CD14-positive monocyte (primary cell): ENCODE measurements at regions of chr4 and their contacts with region 1.

Region 1: DNA sequence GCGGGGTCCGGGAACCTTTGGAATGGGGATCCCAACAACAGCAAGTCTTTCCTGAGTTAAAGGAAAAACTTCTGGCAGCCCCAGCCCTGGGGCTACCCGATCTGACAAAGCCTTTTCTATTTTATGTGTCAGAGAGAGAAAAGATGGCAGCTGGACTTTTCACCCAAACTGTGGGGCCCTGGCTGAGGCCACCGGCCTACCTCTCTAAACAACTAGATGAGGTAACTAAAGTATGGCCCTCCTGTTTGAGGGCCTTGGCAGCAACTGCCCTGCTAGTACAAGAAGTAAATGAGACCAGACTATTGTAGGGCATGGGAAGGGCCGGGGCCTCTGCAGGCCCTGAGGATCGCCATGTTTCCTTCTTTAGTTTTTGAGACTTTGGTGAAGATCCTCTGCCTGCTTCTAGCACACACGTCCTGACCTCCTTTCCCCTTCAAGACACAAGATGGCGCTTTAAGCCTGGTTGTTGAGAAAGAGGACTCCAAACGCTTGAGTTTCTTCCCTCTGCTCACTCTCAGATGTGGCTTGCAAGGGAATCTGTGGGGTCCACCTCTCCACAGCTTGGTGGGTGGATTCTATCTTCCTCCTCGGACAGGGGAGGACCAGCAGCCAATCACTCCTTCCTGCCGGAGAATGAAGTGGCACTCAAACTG is 18.5 kb upstream of the DRD5 start:
- DNase-seq: peak; percentile 42 to 65 (median 56)
- H3K4me3 ChIP-seq: no peak overlapping the region
- H3K4me3 Mint-ChIP-seq: no peak overlapping the region
- H3K27ac ChIP-seq: no peak overlapping the region
- H3K27ac Mint-ChIP-seq: peak overlapping the region in 1 of 7 donors; percentile 5
- H3K4me1 ChIP-seq: peaks cover 3% of the 10 kb centered on the region in 2 donors
- H3K4me1 Mint-ChIP-seq: peaks cover 6% of the 10 kb centered on the region
- H3K27me3 ChIP-seq: no peaks in the 10 kb centered on the region
- H3K27me3 Mint-ChIP-seq: peaks cover 0 to 13% (median 8%) of the 10 kb centered on the region in 3 donors
- CTCF ChIP-seq: peak; percentile 65

Region 2: GRCh38 chr4:9679704-9680478 is 83.1 kb before region 1 on chr4:
- intact Hi-C with region 1: no loop called
- DNase-seq: no peak
- H3K4me3 ChIP-seq: no peak overlapping the region
- H3K4me3 Mint-ChIP-seq: no peak overlapping the region
- H3K27ac ChIP-seq: no peak overlapping the region
- H3K27ac Mint-ChIP-seq: no peak overlapping the region
- H3K4me1 ChIP-seq: no peaks in the 10 kb centered on the region
- H3K4me1 Mint-ChIP-seq: no peaks in the 10 kb centered on the region
- H3K27me3 ChIP-seq: no peaks in the 10 kb centered on the region
- H3K27me3 Mint-ChIP-seq: peaks cover 0 to 10% (median 4%) of the 10 kb centered on the region in 3 donors
- CTCF ChIP-seq: no peak

Region 3: GRCh38 chr4:9716093-9716492 is 46.9 kb before region 1 on chr4:
- intact Hi-C with region 1: no loop called
- DNase-seq: no peak
- H3K4me3 ChIP-seq: no peak overlapping the region
- H3K4me3 Mint-ChIP-seq: no peak overlapping the region
- H3K27ac ChIP-seq: no peak overlapping the region
- H3K27ac Mint-ChIP-seq: peak overlapping the region in 1 of 7 donors; percentile 54
- H3K4me1 ChIP-seq: no peaks in the 10 kb centered on the region
- H3K4me1 Mint-ChIP-seq: peaks cover 9% of the 10 kb centered on the region
- H3K27me3 ChIP-seq: no peaks in the 10 kb centered on the region
- H3K27me3 Mint-ChIP-seq: peaks cover 0 to 5% (median 2%) of the 10 kb centered on the region in 3 donors
- CTCF ChIP-seq: no peak

Region 4: GRCh38 chr4:10018818-10019461 is 256.0 kb after region 1 on chr4:
- intact Hi-C with region 1: loop called (anchors 5 kb)
- DNase-seq: peak; percentile 96 to 97 (median 96)
- H3K4me3 ChIP-seq: peak overlapping the region; percentile 13 to 69 (median 51)
- H3K4me3 Mint-ChIP-seq: peak overlapping the region; percentile 78 to 92
- H3K27ac ChIP-seq: peak overlapping the region; percentile 95
- H3K27ac Mint-ChIP-seq: peak overlapping the region; percentile 96 to 99 (median 97)
- H3K4me1 ChIP-seq: peaks cover 58 to 63% of the 10 kb centered on the region in 2 donors
- H3K4me1 Mint-ChIP-seq: peaks cover 69% of the 10 kb centered on the region
- H3K27me3 ChIP-seq: no peaks in the 10 kb centered on the region
- H3K27me3 Mint-ChIP-seq: no peaks in the 10 kb centered on the region
- CTCF ChIP-seq: peak; percentile 100

Region 5: DNA sequence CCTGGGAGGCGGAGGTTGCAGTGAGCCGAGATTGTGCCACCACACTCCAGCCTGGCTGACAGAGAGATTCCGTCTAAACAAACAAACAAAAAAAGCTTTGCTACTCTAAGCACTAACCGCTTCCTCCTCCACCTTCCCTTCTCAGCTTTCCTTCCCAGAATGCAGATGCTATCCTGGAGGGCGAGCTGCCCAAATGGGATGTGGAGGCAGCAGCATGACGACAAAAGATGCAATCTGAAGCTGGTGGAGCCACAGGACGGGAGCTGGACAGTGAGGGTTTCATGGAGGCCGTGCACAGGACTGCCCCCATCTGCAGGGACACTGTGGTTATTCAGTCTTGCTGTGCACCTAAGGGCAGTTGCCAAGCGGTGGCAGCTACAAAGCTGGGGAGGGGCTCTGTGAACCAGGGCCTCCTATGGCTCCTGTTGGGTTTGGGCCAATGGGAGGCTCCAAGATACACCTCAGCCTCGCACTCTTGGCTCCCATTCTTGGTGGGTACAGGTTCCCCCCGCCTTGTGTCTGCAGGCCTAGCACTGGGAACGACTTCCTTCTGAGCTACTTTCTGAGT is 306.2 kb after region 1 on chr4:
- intact Hi-C with region 1: loop called in 1 of 2 experiments (anchors 5 kb)
- DNase-seq: no peak
- H3K4me3 ChIP-seq: no peak overlapping the region
- H3K4me3 Mint-ChIP-seq: no peak overlapping the region
- H3K27ac ChIP-seq: no peak overlapping the region
- H3K27ac Mint-ChIP-seq: peak overlapping the region in 2 of 7 donors; percentile 68 to 71
- H3K4me1 ChIP-seq: peaks cover under 1 to 2% of the 10 kb centered on the region in 2 donors
- H3K4me1 Mint-ChIP-seq: peaks cover under 1% of the 10 kb centered on the region
- H3K27me3 ChIP-seq: no peaks in the 10 kb centered on the region
- H3K27me3 Mint-ChIP-seq: no peaks in the 10 kb centered on the region
- CTCF ChIP-seq: no peak

Region 6: DNA sequence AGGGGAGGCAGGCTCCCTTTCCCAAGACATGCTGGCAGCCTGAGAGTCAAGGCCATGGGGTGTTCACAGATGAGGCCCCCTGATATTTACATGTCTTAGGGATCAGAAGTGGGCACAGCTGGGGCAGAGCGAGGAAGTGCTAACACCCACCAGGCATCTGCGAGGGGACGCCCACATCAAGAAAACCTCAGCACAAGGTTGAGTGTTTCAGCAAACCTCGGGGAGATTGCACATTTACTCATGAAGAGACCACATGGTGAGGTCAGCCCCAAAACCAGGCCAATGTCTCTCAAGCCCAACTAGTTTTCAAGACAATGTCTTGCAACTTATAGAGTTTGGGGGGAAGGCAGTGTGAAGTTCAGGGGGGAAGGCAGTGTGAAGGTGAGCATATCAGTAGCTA is 866.4 kb after region 1 on chr4:
- intact Hi-C with region 1: no loop called
- DNase-seq: no peak
- H3K4me3 ChIP-seq: no peak overlapping the region
- H3K4me3 Mint-ChIP-seq: no peak overlapping the region
- H3K27ac ChIP-seq: no peak overlapping the region
- H3K27ac Mint-ChIP-seq: peak overlapping the region in 1 of 7 donors; percentile 24
- H3K4me1 ChIP-seq: no peaks in the 10 kb centered on the region
- H3K4me1 Mint-ChIP-seq: peaks cover 2% of the 10 kb centered on the region
- H3K27me3 ChIP-seq: no peaks in the 10 kb centered on the region
- H3K27me3 Mint-ChIP-seq: peaks cover 0 to 1% (median 0%) of the 10 kb centered on the region in 3 donors
- CTCF ChIP-seq: no peak

Region 7: GRCh38 chr4:10889819-10890218 is 1126.9 kb after region 1 on chr4:
- intact Hi-C with region 1: no loop called
- DNase-seq: no peak
- H3K4me3 ChIP-seq: no peak overlapping the region
- H3K4me3 Mint-ChIP-seq: no peak overlapping the region
- H3K27ac ChIP-seq: no peak overlapping the region
- H3K27ac Mint-ChIP-seq: no peak overlapping the region
- H3K4me1 ChIP-seq: no peaks in the 10 kb centered on the region
- H3K4me1 Mint-ChIP-seq: peaks cover 5% of the 10 kb centered on the region
- H3K27me3 ChIP-seq: no peaks in the 10 kb centered on the region
- H3K27me3 Mint-ChIP-seq: peaks cover 0 to 7% (median 4%) of the 10 kb centered on the region in 3 donors
- CTCF ChIP-seq: no peak